Transverse colon (tissue), 4 donors: ENCODE measurements at regions of chr2 and their contacts with region 1.

Region 1: DNA sequence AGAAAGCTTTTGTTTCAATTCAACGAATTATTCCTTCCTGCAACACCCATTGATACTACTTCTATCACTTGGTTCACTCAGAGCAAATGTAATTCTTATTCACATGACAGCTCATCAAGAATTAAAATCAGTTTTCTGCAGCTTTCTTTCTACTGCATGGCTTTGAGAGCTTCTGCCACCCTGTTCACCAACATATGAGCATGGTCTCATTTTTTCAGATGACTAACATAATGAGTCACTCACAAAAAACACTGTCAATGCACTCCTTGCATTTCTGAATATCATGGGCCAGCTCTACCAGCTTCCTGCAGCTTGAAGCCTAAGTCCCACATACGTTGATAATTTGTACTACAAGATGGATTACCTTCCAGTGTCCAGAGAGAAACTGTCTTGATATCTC is 342.9 kb downstream of the LRATD1 start:
- DNase-seq: no peak
- H3K4me3 ChIP-seq: no peak overlapping the region
- H3K27ac ChIP-seq: no peak overlapping the region
- H3K4me1 ChIP-seq: no peaks in the 10 kb centered on the region
- H3K27me3 ChIP-seq: no peaks in the 10 kb centered on the region
- CTCF ChIP-seq: no peak
- EP300 ChIP-seq: no peak
- POLR2A ChIP-seq: no peak

Region 2: DNA sequence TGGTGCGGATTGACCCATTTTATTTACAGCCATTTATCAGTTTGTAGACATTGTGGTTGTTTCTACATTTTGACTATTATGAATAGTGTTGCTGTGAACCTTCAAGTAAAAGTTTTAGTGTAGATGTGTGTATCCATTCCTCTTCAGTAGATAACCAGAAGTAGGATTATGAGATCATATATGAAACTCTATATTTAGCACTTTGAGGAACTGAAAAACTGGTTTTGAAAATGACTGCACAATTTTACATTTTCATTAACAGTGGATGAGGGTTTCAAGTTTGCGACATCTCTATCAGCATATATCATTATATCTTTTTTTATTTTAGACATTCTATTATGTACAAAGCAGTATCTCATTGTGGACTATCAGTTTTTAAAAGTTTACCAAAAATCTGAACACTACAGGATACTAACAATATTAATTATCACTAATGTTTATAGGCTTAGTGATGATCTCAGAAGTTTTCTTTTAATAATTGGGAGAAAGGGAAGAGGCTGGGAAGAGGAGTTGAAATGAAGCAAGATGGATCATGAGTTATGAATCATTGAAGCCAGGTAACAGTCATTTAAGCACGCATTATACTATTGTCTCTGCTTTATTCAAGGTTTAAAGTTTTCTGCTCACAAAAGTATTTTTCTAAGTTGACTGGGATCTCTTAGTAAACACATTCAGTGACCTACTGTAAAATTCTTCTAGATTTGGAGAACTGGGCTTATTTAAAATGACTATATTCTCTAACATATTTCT is 671.8 kb before region 1 on chr2:
- in situ Hi-C with region 1: no loop called
- intact Hi-C with region 1: loop called (anchors 10 kb)
- DNase-seq: no peak
- H3K4me3 ChIP-seq: no peak overlapping the region
- H3K27ac ChIP-seq: no peak overlapping the region
- H3K4me1 ChIP-seq: no peaks in the 10 kb centered on the region
- H3K27me3 ChIP-seq: no peaks in the 10 kb centered on the region
- CTCF ChIP-seq: no peak
- EP300 ChIP-seq: no peak
- POLR2A ChIP-seq: no peak

Region 3: DNA sequence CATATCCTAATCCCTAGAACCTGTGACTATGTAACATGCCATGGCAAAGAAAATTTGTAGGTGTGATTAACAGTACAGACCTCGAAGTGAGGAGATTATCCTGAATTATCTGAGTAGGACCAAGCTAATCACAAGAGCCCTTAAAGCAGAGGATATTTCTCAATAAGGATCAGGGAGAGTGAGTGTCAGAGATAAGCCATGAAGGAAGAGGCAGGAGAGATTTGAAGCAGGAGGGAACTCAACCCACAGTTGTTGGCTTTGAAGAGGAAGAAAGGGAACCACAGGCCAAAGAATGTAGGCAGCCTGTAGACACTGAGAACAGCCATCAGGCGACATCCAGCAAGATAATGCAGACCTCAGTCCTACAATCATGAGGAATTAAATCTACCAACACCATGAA is 356.4 kb after region 1 on chr2:
- in situ Hi-C with region 1: no loop called
- intact Hi-C with region 1: no loop called
- DNase-seq: no peak
- H3K4me3 ChIP-seq: no peak overlapping the region
- H3K27ac ChIP-seq: no peak overlapping the region
- H3K4me1 ChIP-seq: no peaks in the 10 kb centered on the region
- H3K27me3 ChIP-seq: no peaks in the 10 kb centered on the region
- CTCF ChIP-seq: no peak
- EP300 ChIP-seq: no peak
- POLR2A ChIP-seq: no peak